Panc1 (cell line): ENCODE measurements at regions of chr4 and their contacts with region 1.

Region 1: GRCh38 chr4:120922381-120923206 is at the start of gene PRDM5:
- DNase-seq: no peak
- ATAC-seq: peak; percentile 83
- H3K4me3 ChIP-seq: peak within 1 kb of the TSS; percentile 64 to 68
- H3K27ac ChIP-seq: peak within 1 kb of the TSS; percentile 84
- H3K4me1 ChIP-seq: 0 out of 2 replicates have a peak, but pooled peaks cover 5% of the 10 kb centered on the region
- H3K27me3 ChIP-seq: no peaks in the 10 kb centered on the region
- CTCF ChIP-seq: no peak; the same call in 1 of the 2 replicates
- total RNA-seq, gene PRDM5: 8.4 TPM

Region 2: GRCh38 chr4:120703908-120704307 is 218.7 kb before region 1 on chr4:
- CTCF ChIA-PET with region 1: no interaction called
- POLR2A ChIA-PET with region 1: no interaction called
- in situ Hi-C with region 1: no loop called
- intact Hi-C with region 1: no loop called
- DNase-seq: no peak
- ATAC-seq: no peak
- H3K4me3 ChIP-seq: no peak overlapping the region
- H3K27ac ChIP-seq: no peak overlapping the region
- H3K4me1 ChIP-seq: no peaks in the 10 kb centered on the region
- H3K27me3 ChIP-seq: no peaks in the 10 kb centered on the region
- CTCF ChIP-seq: no peak

Region 3: DNA sequence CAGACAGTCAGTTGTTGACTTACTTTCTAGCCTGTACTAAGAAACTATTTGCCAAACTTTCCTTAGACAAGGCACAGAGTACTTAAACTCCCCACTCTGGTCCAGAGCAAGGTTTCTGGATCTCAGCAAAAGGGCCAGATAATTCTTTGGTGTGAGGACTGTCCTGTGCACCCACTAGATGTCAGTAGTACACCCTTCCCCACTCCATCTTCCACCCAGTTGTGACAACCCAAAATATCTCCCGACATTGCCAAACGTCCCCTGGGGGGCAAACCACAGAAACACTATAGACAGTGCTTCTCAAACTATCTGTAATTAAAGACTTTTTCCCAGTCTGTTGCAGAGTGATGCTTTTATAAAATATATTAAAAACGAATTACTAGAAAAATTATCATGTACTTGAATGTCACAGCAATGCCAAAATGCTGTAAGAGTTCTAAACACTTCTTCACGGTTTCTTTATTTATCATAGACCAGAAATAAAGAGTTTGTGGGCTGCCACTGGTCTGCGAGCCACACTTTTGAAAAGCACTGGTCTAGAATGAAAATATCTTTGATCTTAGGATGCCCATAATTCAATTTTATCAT is 203.5 kb before region 1 on chr4:
- CTCF ChIA-PET with region 1: no interaction called
- POLR2A ChIA-PET with region 1: no interaction called
- in situ Hi-C with region 1: no loop called
- intact Hi-C with region 1: loop called (anchors 5 kb)
- DNase-seq: peak; percentile 20
- ATAC-seq: peak; percentile 78; the same call in 1 of the 2 replicates
- H3K4me3 ChIP-seq: no peak overlapping the region
- H3K27ac ChIP-seq: no peak overlapping the region
- H3K4me1 ChIP-seq: no peaks in the 10 kb centered on the region
- H3K27me3 ChIP-seq: no peaks in the 10 kb centered on the region
- CTCF ChIP-seq: peak; percentile 78

Region 4: GRCh38 chr4:120895554-120895953 is 27.0 kb before region 1 on chr4:
- CTCF ChIA-PET with region 1: no interaction called
- POLR2A ChIA-PET with region 1: no interaction called
- in situ Hi-C with region 1: no loop called
- intact Hi-C with region 1: no loop called
- DNase-seq: no peak
- ATAC-seq: no peak
- H3K4me3 ChIP-seq: no peak overlapping the region
- H3K27ac ChIP-seq: no peak overlapping the region
- H3K4me1 ChIP-seq: no peaks in the 10 kb centered on the region
- H3K27me3 ChIP-seq: no peaks in the 10 kb centered on the region
- CTCF ChIP-seq: no peak

Region 5: DNA sequence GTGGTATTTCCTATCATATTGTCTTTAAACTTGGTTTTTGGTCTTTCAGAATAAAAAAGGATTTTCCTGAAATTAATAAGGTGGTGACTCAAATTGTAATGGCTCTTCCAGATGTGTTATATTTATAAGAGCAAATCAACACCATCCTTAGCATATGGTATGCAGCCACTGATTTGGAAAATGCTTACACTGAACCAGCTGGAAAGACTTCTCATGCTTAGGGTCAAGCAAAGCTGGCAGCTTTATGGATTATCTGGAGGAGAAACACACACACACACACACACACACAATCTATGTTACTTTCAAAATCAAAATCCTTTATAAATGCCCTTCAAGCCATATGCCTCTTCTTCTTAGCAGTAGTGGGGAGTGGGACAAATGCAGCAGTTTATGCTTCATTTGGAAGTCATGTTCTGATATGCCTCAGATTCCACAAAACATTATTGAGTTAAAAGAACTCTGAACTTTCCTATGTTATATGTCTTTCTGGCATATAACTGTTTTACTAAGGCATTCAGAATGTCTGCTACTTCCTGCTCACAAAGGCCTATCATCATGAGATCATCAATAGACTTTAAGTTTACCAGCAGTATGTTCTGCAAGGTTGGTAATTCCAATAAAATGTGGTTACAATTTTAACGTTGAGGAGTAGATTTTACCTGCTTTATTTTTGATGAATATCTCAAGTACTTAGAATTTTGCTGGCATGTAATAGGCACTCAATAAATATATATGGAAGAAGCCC is 72.8 kb after region 1 on chr4:
- CTCF ChIA-PET with region 1: no interaction called
- POLR2A ChIA-PET with region 1: no interaction called
- in situ Hi-C with region 1: no loop called
- intact Hi-C with region 1: no loop called
- DNase-seq: no peak
- ATAC-seq: no peak
- H3K4me3 ChIP-seq: no peak overlapping the region
- H3K27ac ChIP-seq: no peak overlapping the region
- H3K4me1 ChIP-seq: no peaks in the 10 kb centered on the region
- H3K27me3 ChIP-seq: no peaks in the 10 kb centered on the region
- CTCF ChIP-seq: no peak